SK-N-SH (cell line): ENCODE measurements at regions of chr2 and their contacts with region 1.

Region 1: GRCh38 chr2:218979846-218980734 is 4.9 kb downstream of the FEV start:
- DNase-seq: peak; percentile 88
- H3K4me3 ChIP-seq: peak overlapping the region; percentile 45 to 75
- H3K27ac ChIP-seq: peak overlapping the region in 1 of 2 experiments; percentile 69; a peak in 2 of 4 replicates
- H3K4me1 ChIP-seq: peaks cover 0 to 28% of the 10 kb centered on the region in 2 experiments; a peak in 1 of 4 replicates
- H3K27me3 ChIP-seq: peaks cover 28% of the 10 kb centered on the region
- CTCF ChIP-seq: peak; percentile 98
- EP300 ChIP-seq: no peak
- RAD21 ChIP-seq: peak; percentile 80

Region 2: DNA sequence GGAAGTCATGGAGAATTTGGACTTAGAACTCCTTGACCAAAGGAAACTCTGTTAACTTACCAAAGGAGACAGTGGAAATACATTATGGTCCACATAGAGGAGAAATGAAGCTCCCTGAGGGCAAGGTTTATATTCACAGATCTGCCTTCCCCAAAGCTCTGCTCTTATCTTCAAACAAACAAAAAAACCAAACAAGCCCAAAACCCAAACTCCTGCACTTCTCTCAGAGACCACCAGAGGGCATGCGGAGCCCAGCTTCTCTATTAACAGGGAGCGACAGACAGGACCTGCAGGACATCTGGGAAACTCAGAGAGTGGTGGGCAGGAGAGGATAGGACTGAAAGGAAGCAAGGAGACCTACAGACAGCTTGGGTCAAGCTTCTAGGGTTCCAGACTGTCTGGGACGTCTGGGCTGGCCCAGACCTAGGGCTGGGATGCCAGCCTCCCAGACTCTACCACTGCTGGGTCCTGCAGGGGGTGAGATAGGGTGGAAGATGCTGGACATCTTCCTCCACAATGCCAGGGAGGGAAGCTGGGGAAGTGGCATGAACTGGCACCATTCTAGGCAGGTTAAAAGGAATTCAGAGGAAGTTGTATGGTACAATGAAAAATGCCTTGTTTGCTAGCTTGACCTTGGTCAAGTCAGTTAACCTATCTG is 103.4 kb before region 1 on chr2:
- CTCF ChIA-PET with region 1: interaction called, 39 read pairs
- POLR2A ChIA-PET with region 1: no interaction called
- DNase-seq: peak; percentile 88
- H3K4me3 ChIP-seq: no peak overlapping the region
- H3K27ac ChIP-seq: peak overlapping the region in 1 of 2 experiments; percentile 78; a peak in 2 of 4 replicates
- H3K4me1 ChIP-seq: peaks cover 0 to 54% of the 10 kb centered on the region in 2 experiments; a peak in 2 of 4 replicates
- H3K27me3 ChIP-seq: peaks cover 39% of the 10 kb centered on the region
- CTCF ChIP-seq: peak; percentile 95
- EP300 ChIP-seq: peak in 1 of 2 experiments; percentile 26; a peak in 1 of 4 replicates
- RAD21 ChIP-seq: peak; percentile 95

Region 3: GRCh38 chr2:218995972-218996711 is 16.1 kb after region 1 on chr2:
- CTCF ChIA-PET with region 1: interaction called, 183 read pairs
- POLR2A ChIA-PET with region 1: interaction called, 89 read pairs
- DNase-seq: peak; percentile 96
- H3K4me3 ChIP-seq: peak overlapping the region; percentile 57 to 61
- H3K27ac ChIP-seq: peak overlapping the region in 1 of 2 experiments; percentile 99; a peak in 2 of 4 replicates
- H3K4me1 ChIP-seq: peaks cover 0 to 61% of the 10 kb centered on the region in 2 experiments; a peak in 2 of 4 replicates
- H3K27me3 ChIP-seq: no peaks in the 10 kb centered on the region
- CTCF ChIP-seq: peak; percentile 85
- EP300 ChIP-seq: 0 out of 4 replicates have a peak, but pooled peaks of 1 of the 2 experiments have one; percentile 24
- RAD21 ChIP-seq: peak; percentile 96

Region 4: DNA sequence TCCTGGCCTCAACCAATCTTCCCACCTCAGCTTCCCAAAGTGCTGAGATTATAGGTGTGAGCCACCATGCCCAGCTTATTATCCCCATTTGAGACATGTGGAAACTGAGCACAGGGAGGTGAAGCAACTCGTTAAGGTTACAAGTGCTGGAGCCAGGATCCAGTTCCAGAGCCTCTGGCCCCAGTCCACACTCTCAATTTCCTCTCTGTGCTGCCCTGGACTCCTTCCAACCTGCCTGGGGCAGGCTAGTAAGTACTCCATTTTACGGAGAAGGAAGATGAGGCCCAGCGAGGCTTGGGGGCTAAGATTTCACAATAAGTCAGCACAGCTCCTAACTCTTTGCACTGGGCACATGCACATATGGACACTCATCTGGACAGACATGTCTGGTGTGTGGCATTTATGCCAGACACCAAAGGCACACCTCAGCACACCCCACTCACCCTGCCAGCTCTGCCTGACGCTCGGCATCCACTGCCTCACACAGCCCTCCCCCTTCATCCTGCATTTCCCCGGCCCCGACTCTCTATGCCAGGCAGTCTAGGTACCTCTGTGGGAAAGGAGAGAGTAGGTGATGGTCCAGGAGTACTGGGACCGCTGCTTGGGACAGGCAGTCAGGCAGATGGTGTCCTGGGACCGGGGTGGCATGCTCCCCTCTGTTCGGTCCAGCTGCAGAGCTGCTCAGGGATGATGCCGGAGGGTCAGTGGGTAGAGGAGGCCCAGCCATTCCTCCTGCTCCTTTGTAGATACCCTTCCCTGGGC is 40.7 kb after region 1 on chr2:
- CTCF ChIA-PET with region 1: interaction called, 15 read pairs
- POLR2A ChIA-PET with region 1: no interaction called
- DNase-seq: peak; percentile 57
- H3K4me3 ChIP-seq: no peak overlapping the region
- H3K27ac ChIP-seq: peak overlapping the region in 1 of 2 experiments; percentile 71; a peak in 2 of 4 replicates
- H3K4me1 ChIP-seq: peaks cover 0 to 48% of the 10 kb centered on the region in 2 experiments; a peak in 1 of 4 replicates
- H3K27me3 ChIP-seq: peaks cover 32% of the 10 kb centered on the region
- CTCF ChIP-seq: no peak
- EP300 ChIP-seq: peak in 1 of 2 experiments; percentile 5; a peak in 1 of 4 replicates
- RAD21 ChIP-seq: no peak

Region 5: GRCh38 chr2:219155054-219155644 is 175.1 kb after region 1 on chr2:
- CTCF ChIA-PET with region 1: interaction called, 31 read pairs
- POLR2A ChIA-PET with region 1: no interaction called
- DNase-seq: peak; percentile 73
- H3K4me3 ChIP-seq: no peak overlapping the region
- H3K27ac ChIP-seq: no peak overlapping the region
- H3K4me1 ChIP-seq: peaks cover 0 to 5% of the 10 kb centered on the region in 2 experiments; a peak in 1 of 4 replicates
- H3K27me3 ChIP-seq: no peaks in the 10 kb centered on the region
- CTCF ChIP-seq: peak; percentile 67
- EP300 ChIP-seq: no peak
- RAD21 ChIP-seq: peak; percentile 90